ENCODE measurements at regions of chr21 and their contacts with region 1.

Region 1: DNA sequence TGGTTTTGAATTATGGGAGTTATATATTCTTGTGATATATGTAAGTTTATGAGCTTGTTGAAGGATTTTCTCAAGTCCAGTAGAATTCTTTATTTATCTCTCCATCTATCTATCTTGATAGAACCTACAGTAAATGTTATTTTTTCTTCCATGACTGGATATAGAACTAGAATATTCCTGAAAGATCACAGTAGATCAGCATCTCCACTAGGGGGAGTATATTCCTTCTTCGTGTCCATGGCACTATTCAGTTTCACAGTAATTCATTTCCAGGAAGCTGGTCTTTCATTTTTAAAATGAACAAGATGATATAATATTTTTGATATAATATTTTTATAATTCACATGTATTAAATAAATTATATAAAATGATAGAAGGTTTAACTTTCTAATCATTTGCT is 18.8 kb downstream of the TMPRSS15 start:
- H3K4me3 ChIP-seq: no peak overlapping the region
- H3K27ac ChIP-seq: no peak overlapping the region
- H3K4me1 ChIP-seq: no peaks in the 10 kb centered on the region
- CTCF ChIP-seq: no peak

Region 2: GRCh38 chr21:18370301-18370700 is 14.5 kb before region 1 on chr21:
- CTCF ChIA-PET with region 1: interaction called, 15 read pairs
- POLR2A ChIA-PET with region 1: no interaction called
- H3K4me3 ChIP-seq: no peak overlapping the region
- H3K27ac ChIP-seq: no peak overlapping the region
- H3K4me1 ChIP-seq: no peaks in the 10 kb centered on the region
- CTCF ChIP-seq: no peak

Region 3: GRCh38 chr21:18398843-18399242 is 14.1 kb after region 1 on chr21:
- CTCF ChIA-PET with region 1: interaction called, 15 read pairs
- POLR2A ChIA-PET with region 1: no interaction called
- H3K4me3 ChIP-seq: no peak overlapping the region
- H3K27ac ChIP-seq: no peak overlapping the region
- H3K4me1 ChIP-seq: no peaks in the 10 kb centered on the region
- CTCF ChIP-seq: no peak

Region 4: DNA sequence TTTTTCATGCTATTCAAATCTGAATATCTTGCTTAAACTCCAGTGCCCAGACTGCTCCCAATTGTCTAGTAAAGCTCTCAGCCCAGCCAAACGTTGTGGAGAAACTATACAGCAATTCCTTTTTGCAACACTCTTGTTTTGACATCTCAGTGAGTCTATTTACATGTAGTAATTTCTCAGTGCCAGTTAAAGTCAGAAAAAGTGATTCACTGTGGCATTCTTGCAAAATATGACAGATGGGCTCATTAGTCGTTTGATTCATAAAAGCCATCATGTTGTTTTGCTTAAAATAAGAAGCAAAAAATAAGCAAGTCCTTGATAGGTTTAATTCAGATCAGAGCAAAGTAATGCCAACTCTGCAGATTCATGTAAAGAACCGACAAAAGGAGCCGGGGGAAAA is 39.5 kb after region 1 on chr21:
- CTCF ChIA-PET with region 1: interaction called, 11 read pairs
- POLR2A ChIA-PET with region 1: no interaction called
- H3K4me3 ChIP-seq: no peak overlapping the region
- H3K27ac ChIP-seq: no peak overlapping the region
- H3K4me1 ChIP-seq: no peaks in the 10 kb centered on the region
- CTCF ChIP-seq: no peak

Region 5: GRCh38 chr21:18677632-18678031 is 292.9 kb after region 1 on chr21:
- CTCF ChIA-PET with region 1: no interaction called
- POLR2A ChIA-PET with region 1: no interaction called
- H3K4me3 ChIP-seq: no peak overlapping the region
- H3K27ac ChIP-seq: no peak overlapping the region
- H3K4me1 ChIP-seq: no peaks in the 10 kb centered on the region
- CTCF ChIP-seq: no peak

Measured in HEK293 (cell line).